Naive thymus-derived CD8-positive, alpha-beta T cell (primary cell): ENCODE measurements at regions of chr11 and their contacts with region 1.

Region 1: DNA sequence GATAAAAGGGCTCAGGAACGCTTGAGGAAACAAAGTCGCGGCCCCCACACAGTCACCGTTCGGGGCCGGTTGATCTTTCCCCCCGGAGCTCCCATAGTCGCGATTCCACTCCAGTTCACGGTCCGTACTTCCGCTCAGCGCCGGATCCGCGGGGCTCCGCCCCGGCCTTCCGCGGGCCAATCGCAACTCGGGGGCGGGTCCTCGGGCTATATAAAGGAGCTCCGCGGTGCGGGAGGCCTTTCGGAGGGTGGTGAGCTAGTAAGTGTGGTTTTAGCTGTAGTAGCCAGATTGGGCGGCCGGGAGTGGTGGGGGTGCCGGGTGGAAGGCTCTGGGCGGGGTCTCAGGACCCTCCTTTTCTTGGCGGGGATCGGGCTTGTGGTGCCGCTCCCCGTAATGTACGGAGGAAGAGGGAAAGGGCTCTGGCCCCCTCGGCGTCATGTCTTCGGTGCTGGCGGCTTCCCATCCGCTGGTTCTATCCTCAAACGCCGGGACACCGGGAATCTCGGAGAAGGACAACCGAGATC is at the starts of genes C11orf98 and CSKMT:
- DNase-seq: peak; percentile 89 to 98 (median 96)
- ATAC-seq: peak; percentile 89 to 91
- H3K4me3 Mint-ChIP-seq: peak within 1 kb of the TSS; percentile 94 to 98 (median 95)
- H3K27ac Mint-ChIP-seq: peak within 1 kb of the TSS; percentile 86 to 97 (median 96)
- H3K4me1 Mint-ChIP-seq: peaks cover 22 to 49% (median 42%) of the 10 kb centered on the region in 4 donors
- H3K27me3 Mint-ChIP-seq: no peaks in the 10 kb centered on the region
- polyA plus RNA-seq, gene C11orf98: 99.9 to 149 (median 117) TPM
- polyA plus RNA-seq, gene CSKMT: 1.8 to 3.7 (median 3.4) TPM

Region 2: DNA sequence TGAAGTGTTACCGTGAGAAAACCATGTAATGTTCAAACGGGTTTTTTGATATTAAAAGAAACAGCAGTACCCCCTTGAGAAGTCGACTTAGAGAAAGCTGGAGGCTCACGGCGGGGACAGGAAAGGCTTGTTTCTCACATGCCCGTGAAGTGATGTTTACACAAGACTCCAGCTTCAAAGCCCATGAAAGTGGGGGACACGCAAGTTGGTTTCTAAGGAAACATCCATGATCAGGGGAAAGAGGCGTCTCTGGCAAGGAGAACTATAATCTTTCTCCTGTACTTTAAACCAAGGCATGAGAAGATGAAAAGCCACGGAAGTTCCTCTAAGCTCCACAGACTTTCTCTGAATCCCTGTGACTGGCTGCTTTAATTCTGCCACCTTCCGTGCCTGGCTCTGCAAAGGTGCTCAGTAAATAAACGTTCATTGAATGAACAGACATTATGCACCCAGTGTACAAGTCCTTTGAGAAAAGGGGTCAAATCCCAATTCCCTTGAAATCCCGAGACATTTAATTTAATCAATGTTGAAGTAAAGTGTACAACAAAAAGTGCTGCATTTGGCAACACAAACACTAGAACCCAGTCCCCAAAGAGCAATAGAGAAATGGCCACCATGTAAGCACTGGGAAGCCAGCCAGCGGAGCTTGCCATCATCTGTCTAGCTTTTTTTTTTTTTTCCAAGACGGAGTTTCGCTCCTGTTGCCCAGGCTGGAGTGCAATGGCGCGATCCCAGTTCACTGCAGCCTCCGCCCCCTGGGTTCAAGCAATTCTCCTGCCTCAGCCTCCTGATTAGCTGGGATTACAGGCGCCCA is 177.2 kb before region 1 on chr11:
- POLR2A ChIA-PET with region 1: no interaction called
- DNase-seq: no peak
- ATAC-seq: no peak
- H3K4me3 Mint-ChIP-seq: no peak overlapping the region
- H3K27ac Mint-ChIP-seq: peak overlapping the region in 4 of 10 donors; percentile 29 to 65 (median 46)
- H3K4me1 Mint-ChIP-seq: peaks cover 2 to 9% (median 6%) of the 10 kb centered on the region in 4 donors
- H3K27me3 Mint-ChIP-seq: peaks cover 2 to 11% (median 3%) of the 10 kb centered on the region in 5 donors

Region 3: GRCh38 chr11:62601394-62602140 is 63.6 kb before region 1 on chr11 and contains the start of gene MTA2:
- POLR2A ChIA-PET with region 1: interaction called, 29 read pairs
- DNase-seq: peak; percentile 95 to 100 (median 99)
- ATAC-seq: peak; percentile 82 to 83
- H3K4me3 Mint-ChIP-seq: peak within 1 kb of the TSS; percentile 88 to 95 (median 92)
- H3K27ac Mint-ChIP-seq: peak within 1 kb of the TSS; percentile 93 to 97 (median 96)
- H3K4me1 Mint-ChIP-seq: peaks cover 37 to 66% (median 62%) of the 10 kb centered on the region in 4 donors
- H3K27me3 Mint-ChIP-seq: no peaks in the 10 kb centered on the region
- polyA plus RNA-seq, gene MTA2: 15.8 to 32.6 (median 21.5) TPM

Region 4: DNA sequence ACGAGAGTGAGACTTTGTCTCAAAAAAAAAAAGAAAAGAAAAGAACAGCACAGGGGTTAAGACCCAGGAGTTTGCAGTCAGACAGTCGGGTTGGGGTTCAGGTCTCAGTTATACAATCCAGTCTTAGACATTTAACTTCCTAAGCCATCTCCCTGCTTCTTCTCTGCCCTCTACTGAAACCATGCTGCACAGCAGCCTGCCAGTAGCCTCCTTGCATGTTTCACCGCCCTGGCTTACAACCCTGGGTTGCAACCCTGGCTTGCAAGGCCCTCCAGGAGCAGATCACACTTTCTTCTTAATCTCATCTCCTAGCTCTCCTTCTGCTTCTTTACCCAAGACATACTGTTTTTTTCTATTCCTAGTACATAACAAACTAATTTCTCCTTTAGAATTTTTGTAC is 37.4 kb before region 1 on chr11:
- POLR2A ChIA-PET with region 1: interaction called, 77 read pairs
- DNase-seq: no peak
- ATAC-seq: peak; percentile 34 to 48
- H3K4me3 Mint-ChIP-seq: no peak overlapping the region
- H3K27ac Mint-ChIP-seq: peak overlapping the region in 8 of 10 donors; percentile 24 to 85 (median 54)
- H3K4me1 Mint-ChIP-seq: peaks cover 0 to 15% (median 6%) of the 10 kb centered on the region in 4 donors
- H3K27me3 Mint-ChIP-seq: no peaks in the 10 kb centered on the region

Region 5: DNA sequence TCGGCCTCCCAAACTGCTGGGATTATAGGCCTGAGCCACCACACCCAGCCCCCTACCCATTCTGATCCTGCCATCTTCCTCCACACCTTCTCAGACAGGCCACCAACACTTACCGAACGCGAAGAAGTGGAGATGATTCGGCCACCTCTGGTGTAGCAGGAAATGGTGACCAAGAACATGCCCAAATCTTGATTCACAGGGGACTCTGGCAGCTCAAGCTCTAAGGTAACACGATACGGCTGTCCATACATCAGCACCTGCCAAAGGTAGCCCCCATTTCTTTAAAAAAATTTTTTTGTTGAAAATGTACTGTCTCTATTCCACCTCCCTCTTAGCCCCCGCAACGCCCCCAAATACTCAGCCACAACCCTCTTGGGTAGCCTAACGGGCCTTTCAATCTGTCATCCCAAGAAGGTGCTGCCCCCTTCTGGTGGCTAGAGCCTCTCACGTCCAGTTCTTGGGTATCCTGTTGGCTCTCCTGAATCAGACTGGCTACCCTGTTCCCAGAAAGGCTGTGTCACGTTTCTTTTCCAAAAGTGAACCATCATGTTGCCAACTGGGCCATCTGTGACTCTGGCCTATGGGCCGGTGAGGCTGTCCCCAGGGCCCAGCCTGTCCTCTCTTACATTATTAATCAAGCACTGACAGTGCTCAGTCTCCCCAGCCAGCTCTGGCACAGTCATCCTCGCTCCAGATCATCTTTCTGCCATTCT is 29.5 kb after region 1 on chr11:
- POLR2A ChIA-PET with region 1: interaction called, 20 read pairs
- DNase-seq: peak; percentile 61 to 90 (median 74)
- ATAC-seq: peak; percentile 84 to 97
- H3K4me3 Mint-ChIP-seq: no peak overlapping the region
- H3K27ac Mint-ChIP-seq: peak overlapping the region in 5 of 10 donors; percentile 14 to 70 (median 43)
- H3K4me1 Mint-ChIP-seq: peaks cover 5 to 9% (median 7%) of the 10 kb centered on the region in 4 donors
- H3K27me3 Mint-ChIP-seq: no peaks in the 10 kb centered on the region

Region 6: DNA sequence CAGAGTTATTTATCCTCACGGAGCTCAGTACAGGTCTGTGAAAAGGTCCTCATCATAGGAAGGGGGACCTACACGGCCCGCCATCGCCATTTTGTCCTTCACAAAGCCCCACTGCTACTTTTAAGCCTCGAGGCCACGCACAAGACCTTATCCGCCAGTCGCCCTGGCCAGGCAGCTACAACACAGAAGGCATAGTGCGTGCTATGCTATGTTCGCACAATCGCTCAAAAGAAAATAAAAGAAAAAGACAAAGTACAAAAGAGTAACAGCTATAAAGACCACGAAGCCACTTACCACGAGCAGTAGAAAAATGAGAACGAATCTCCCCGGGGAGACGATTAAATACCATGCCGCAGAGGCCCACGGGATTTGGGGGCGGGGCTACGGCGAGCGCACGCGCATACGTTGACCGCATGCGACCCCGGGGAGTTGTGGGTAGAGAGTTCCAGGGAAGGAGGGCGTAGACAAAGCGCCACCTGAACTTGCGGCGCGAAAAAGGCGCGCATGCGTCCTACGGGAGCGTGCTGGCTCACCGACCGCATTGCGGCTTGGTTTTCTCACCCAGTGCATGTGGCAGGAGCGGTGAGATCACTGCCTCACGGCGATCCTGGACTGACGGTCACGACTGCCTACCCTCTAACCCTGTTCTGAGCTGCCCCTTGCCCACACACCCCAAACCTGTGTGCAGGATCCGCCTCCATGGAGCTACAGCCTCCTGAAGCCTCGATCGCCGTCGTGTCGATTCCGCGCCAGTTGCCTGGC is 190.6 kb after region 1 on chr11:
- POLR2A ChIA-PET with region 1: interaction called, 14 read pairs
- DNase-seq: peak; percentile 94 to 99 (median 98)
- ATAC-seq: peak; percentile 87 to 90
- H3K4me3 Mint-ChIP-seq: peak overlapping the region; percentile 95 to 99 (median 98)
- H3K27ac Mint-ChIP-seq: peak overlapping the region; percentile 88 to 99 (median 98)
- H3K4me1 Mint-ChIP-seq: peaks cover 33 to 54% (median 52%) of the 10 kb centered on the region in 4 donors
- H3K27me3 Mint-ChIP-seq: peaks cover 0 to 4% (median 0%) of the 10 kb centered on the region in 5 donors

Region 7: GRCh38 chr11:63369165-63369970 is 704.2 kb after region 1 on chr11 and contains the start of gene SLC22A9:
- POLR2A ChIA-PET with region 1: no interaction called
- DNase-seq: no peak
- ATAC-seq: no peak
- H3K4me3 Mint-ChIP-seq: no peak within 1 kb of the TSS
- H3K27ac Mint-ChIP-seq: no peak within 1 kb of the TSS
- H3K4me1 Mint-ChIP-seq: no peaks in the 10 kb centered on the region
- H3K27me3 Mint-ChIP-seq: peaks cover 14 to 59% (median 32%) of the 10 kb centered on the region in 5 donors
- polyA plus RNA-seq, gene SLC22A9: not detected